ENCODE measurements at regions of chr2 and their contacts with region 1.

Region 1: GRCh38 chr2:148644883-148645538 is 460 bp downstream of the EPC2 start:
- DNase-seq: peak; percentile 73
- H3K4me3 ChIP-seq: peak overlapping the region; percentile 97
- H3K27ac ChIP-seq: peak overlapping the region; percentile 99
- H3K27me3 ChIP-seq: peaks cover 5% of the 10 kb centered on the region
- CTCF ChIP-seq: peak; percentile 45

Region 2: DNA sequence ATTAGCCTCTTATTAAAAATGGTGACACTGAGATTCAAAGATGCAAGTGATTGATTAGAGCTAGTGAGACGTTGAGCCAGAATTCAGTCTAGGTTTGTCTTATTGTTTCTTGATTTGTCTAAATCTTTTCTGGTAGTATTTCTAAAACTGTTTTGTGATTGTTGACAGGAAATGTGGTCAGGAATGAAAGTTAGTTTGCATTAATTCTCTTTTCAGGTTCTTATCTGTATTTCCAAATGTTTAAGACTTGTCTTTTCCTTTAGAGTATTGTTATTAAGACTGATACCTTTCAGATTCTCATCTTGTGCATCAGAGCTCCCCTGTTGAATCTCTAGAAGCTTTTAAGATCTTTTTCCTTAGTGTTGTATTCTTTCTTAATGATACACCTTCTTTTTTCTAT is 534.8 kb before region 1 on chr2:
- CTCF ChIA-PET with region 1: no interaction called
- POLR2A ChIA-PET with region 1: interaction called, 14 read pairs
- DNase-seq: no peak
- H3K4me3 ChIP-seq: no peak overlapping the region
- H3K27ac ChIP-seq: no peak overlapping the region
- H3K27me3 ChIP-seq: no peaks in the 10 kb centered on the region
- CTCF ChIP-seq: no peak

Region 3: GRCh38 chr2:148509288-148509902 is 135.6 kb before region 1 on chr2:
- CTCF ChIA-PET with region 1: interaction called, 3 read pairs
- POLR2A ChIA-PET with region 1: interaction called, 14 read pairs
- DNase-seq: peak; percentile 55
- H3K4me3 ChIP-seq: 0 out of 2 replicates have a peak overlapping the region, but pooled peaks have one; percentile 11
- H3K27ac ChIP-seq: no peak overlapping the region
- H3K27me3 ChIP-seq: no peaks in the 10 kb centered on the region
- CTCF ChIP-seq: peak; percentile 98

Region 4: GRCh38 chr2:148789059-148789458 is 144.0 kb after region 1 on chr2:
- CTCF ChIA-PET with region 1: no interaction called
- POLR2A ChIA-PET with region 1: interaction called, 11 read pairs
- DNase-seq: no peak
- H3K4me3 ChIP-seq: no peak overlapping the region
- H3K27ac ChIP-seq: no peak overlapping the region
- H3K27me3 ChIP-seq: no peaks in the 10 kb centered on the region
- CTCF ChIP-seq: no peak

Region 5: DNA sequence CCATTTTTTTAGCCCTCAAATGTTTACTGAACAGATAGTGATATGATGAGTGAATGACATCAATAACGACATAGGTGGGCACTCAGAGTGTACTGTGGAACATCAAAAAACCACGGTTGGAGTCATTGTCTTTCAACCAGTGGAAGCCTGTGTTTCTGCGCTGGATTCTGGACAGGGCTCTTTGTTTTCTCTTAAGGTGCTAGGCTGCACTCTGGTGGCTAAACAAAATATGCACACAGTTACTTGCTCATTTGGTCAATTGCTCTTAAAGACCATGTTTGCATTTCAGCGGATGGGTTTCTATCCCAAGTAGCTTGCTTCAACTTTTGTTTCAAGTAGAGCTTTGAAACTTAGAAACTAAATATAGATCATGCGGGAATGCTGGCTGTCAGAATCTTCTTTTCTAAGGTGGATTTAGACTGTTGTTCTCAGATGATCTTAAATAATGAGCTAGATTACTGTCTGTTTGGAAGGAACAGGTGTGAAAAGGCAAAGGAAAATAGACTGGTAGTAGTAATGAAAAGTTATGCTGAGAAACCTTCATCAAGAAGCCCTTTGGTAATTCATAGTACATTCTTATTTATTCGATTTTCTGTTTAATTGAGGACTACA is 345.0 kb after region 1 on chr2:
- CTCF ChIA-PET with region 1: interaction called, 12 read pairs
- POLR2A ChIA-PET with region 1: interaction called, 8 read pairs
- DNase-seq: peak; percentile 44
- H3K4me3 ChIP-seq: no peak overlapping the region
- H3K27ac ChIP-seq: no peak overlapping the region
- H3K27me3 ChIP-seq: peaks cover 5% of the 10 kb centered on the region
- CTCF ChIP-seq: peak; percentile 75